ENCODE measurements at regions of chr2 and their contacts with region 1.

Region 1: DNA sequence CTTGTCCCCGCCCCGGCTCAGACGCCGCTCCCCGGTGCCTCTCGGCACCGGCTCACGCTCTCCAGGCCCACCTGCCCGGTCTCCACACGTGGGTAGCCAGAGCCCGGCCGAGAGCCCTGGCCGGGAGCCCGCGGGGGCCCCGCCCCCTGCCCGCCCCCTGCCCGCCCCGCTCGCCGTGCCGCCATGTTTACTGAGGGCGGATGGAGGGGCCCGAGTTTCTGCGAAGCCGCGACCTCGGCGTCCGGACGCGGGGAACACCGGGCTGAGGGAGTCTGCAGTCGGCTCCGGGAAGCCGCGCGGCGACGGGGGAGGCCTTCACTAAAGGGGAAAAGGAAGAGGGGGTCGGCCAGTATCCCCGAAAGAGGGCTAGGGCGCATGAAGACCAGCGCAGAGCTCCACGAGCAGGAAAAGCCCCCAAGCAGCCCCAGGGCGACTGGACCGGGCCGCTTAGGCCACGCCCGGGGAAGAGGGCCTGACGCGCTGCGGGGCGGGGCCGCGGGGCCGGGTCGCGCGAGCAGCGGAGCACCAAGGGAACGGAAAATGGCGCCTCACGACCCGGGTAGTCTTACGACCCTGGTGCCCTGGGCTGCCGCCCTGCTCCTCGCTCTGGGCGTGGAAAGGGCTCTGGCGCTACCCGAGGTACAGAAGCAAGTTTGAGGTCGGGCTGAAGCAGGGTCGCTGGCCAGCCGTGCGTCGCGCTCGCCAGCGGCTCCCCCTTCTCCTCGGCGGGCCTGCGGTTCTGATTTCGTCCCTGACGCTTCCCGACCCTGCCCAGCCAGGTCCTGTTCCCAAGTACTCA is at the starts of genes ATRAID and SLC5A6:
- DNase-seq: peak; percentile 96
- ATAC-seq: peak; percentile 88
- H3K4me3 Mint-ChIP-seq: peak within 1 kb of the TSS; percentile 97
- H3K27ac Mint-ChIP-seq: peak within 1 kb of the TSS; percentile 100
- H3K4me1 Mint-ChIP-seq: peaks cover 33% of the 10 kb centered on the region
- H3K27me3 Mint-ChIP-seq: no peaks in the 10 kb centered on the region
- CTCF ChIP-seq: no peak
- total RNA-seq, gene ATRAID: 73.9 and 77.2 TPM in 2 replicates
- total RNA-seq, gene SLC5A6: 53.2 and 69.9 TPM in 2 replicates

Region 2: GRCh38 chr2:26970244-26970920 is 241.6 kb before region 1 on chr2 and contains the start of gene MAPRE3:
- CTCF ChIA-PET with region 1: no interaction called
- POLR2A ChIA-PET with region 1: no interaction called
- intact Hi-C with region 1: loop called (anchors 2 kb)
- DNase-seq: peak; percentile 88
- ATAC-seq: peak; percentile 93
- H3K4me3 Mint-ChIP-seq: peak within 1 kb of the TSS; percentile 85
- H3K27ac Mint-ChIP-seq: peak within 1 kb of the TSS; percentile 59
- H3K4me1 Mint-ChIP-seq: peaks cover 21% of the 10 kb centered on the region
- H3K27me3 Mint-ChIP-seq: peaks cover 40% of the 10 kb centered on the region
- CTCF ChIP-seq: no peak
- total RNA-seq, gene MAPRE3: 4.6 and 6.3 TPM in 2 replicates

Region 3: GRCh38 chr2:27042159-27042661 is 169.8 kb before region 1 on chr2:
- CTCF ChIA-PET with region 1: no interaction called
- POLR2A ChIA-PET with region 1: interaction called, 10 read pairs
- intact Hi-C with region 1: no loop called
- DNase-seq: peak; percentile 21
- ATAC-seq: peak; percentile 97
- H3K4me3 Mint-ChIP-seq: peak overlapping the region; percentile 70
- H3K27ac Mint-ChIP-seq: peak overlapping the region; percentile 95
- H3K4me1 Mint-ChIP-seq: peaks cover 35% of the 10 kb centered on the region
- H3K27me3 Mint-ChIP-seq: no peaks in the 10 kb centered on the region
- CTCF ChIP-seq: no peak

Region 4: DNA sequence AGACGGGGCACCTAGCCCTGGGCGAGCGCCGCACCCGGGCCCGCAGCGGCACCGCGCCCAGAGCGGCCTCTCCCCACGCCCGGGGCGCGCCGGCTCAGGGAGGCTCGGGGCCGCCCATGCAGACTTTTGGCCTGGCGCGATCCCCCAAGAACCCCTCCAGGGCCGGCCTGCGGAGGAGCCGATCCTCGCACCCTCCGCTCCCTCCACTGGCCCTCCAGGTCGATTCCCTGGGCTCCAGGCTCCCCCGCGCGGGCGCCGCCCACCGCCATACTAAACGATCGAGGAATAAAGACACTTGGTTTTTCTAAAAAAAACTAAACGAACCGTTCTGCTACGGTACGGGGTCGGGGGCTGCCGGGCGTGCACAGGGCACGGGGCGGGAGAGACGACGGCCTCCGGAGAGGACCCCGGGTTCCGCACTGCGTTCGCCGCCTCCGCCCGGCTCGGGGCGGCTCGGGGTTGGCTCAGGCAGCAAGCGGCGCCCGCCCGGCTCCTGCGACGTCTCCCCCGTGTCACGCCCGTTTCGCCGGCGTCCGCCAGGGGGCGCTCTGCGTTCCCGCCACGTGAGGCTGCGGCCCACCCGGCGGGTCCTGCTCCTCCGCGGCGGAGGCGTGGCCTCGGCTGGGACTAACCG is 125.8 kb before region 1 on chr2:
- CTCF ChIA-PET with region 1: no interaction called
- POLR2A ChIA-PET with region 1: interaction called, 4 read pairs
- intact Hi-C with region 1: loop called (anchors 1 kb)
- DNase-seq: peak; percentile 99
- ATAC-seq: peak; percentile 92
- H3K4me3 Mint-ChIP-seq: peak overlapping the region; percentile 87
- H3K27ac Mint-ChIP-seq: peak overlapping the region; percentile 86
- H3K4me1 Mint-ChIP-seq: peaks cover 18% of the 10 kb centered on the region
- H3K27me3 Mint-ChIP-seq: no peaks in the 10 kb centered on the region
- CTCF ChIP-seq: peak; percentile 44

Region 5: GRCh38 chr2:27264753-27265535 is 52.9 kb after region 1 on chr2:
- CTCF ChIA-PET with region 1: no interaction called
- POLR2A ChIA-PET with region 1: interaction called, 9 read pairs
- intact Hi-C with region 1: loop called (anchors 1 kb)
- DNase-seq: peak; percentile 68
- ATAC-seq: peak; percentile 73
- H3K4me3 Mint-ChIP-seq: peak overlapping the region; percentile 88
- H3K27ac Mint-ChIP-seq: no peak overlapping the region
- H3K4me1 Mint-ChIP-seq: peaks cover 33% of the 10 kb centered on the region
- H3K27me3 Mint-ChIP-seq: peaks cover 44% of the 10 kb centered on the region
- CTCF ChIP-seq: no peak

Region 6: GRCh38 chr2:27356382-27357181 is 144.6 kb after region 1 on chr2 and contains the start of gene GTF3C2:
- CTCF ChIA-PET with region 1: no interaction called
- POLR2A ChIA-PET with region 1: interaction called, 4 read pairs
- intact Hi-C with region 1: loop called (anchors 1 kb)
- DNase-seq: peak; percentile 87
- ATAC-seq: peak; percentile 83
- H3K4me3 Mint-ChIP-seq: peak within 1 kb of the TSS; percentile 98
- H3K27ac Mint-ChIP-seq: peak within 1 kb of the TSS; percentile 100
- H3K4me1 Mint-ChIP-seq: peaks cover 53% of the 10 kb centered on the region
- H3K27me3 Mint-ChIP-seq: no peaks in the 10 kb centered on the region
- CTCF ChIP-seq: no peak
- total RNA-seq, gene GTF3C2: 91.7 and 119 TPM in 2 replicates

Region 7: GRCh38 chr2:27400348-27401135 is 188.5 kb after region 1 on chr2:
- CTCF ChIA-PET with region 1: no interaction called
- POLR2A ChIA-PET with region 1: no interaction called
- intact Hi-C with region 1: no loop called
- DNase-seq: no peak
- ATAC-seq: no peak
- H3K4me3 Mint-ChIP-seq: no peak overlapping the region
- H3K27ac Mint-ChIP-seq: no peak overlapping the region
- H3K4me1 Mint-ChIP-seq: peaks cover 20% of the 10 kb centered on the region
- H3K27me3 Mint-ChIP-seq: no peaks in the 10 kb centered on the region
- CTCF ChIP-seq: no peak

Region 8: GRCh38 chr2:27628767-27629709 is 417.0 kb after region 1 on chr2 and contains the starts of genes CCDC121 and GPN1:
- CTCF ChIA-PET with region 1: no interaction called
- POLR2A ChIA-PET with region 1: no interaction called
- intact Hi-C with region 1: loop called (anchors 2 kb)
- DNase-seq: peak; percentile 85
- ATAC-seq: peak; percentile 99
- H3K4me3 Mint-ChIP-seq: no peak within 1 kb of the TSS
- H3K27ac Mint-ChIP-seq: peak within 1 kb of the TSS; percentile 69
- H3K4me1 Mint-ChIP-seq: peaks cover 12% of the 10 kb centered on the region
- H3K27me3 Mint-ChIP-seq: no peaks in the 10 kb centered on the region
- CTCF ChIP-seq: no peak
- total RNA-seq, gene CCDC121: 0.69 and 0.71 TPM in 2 replicates
- total RNA-seq, gene GPN1: 36.9 and 39.3 TPM in 2 replicates

Region 9: GRCh38 chr2:27833931-27834330 is 621.9 kb after region 1 on chr2:
- CTCF ChIA-PET with region 1: no interaction called
- POLR2A ChIA-PET with region 1: no interaction called
- intact Hi-C with region 1: no loop called
- DNase-seq: no peak
- ATAC-seq: no peak
- H3K4me3 Mint-ChIP-seq: no peak overlapping the region
- H3K27ac Mint-ChIP-seq: no peak overlapping the region
- H3K4me1 Mint-ChIP-seq: no peaks in the 10 kb centered on the region
- H3K27me3 Mint-ChIP-seq: no peaks in the 10 kb centered on the region
- CTCF ChIP-seq: no peak

Measured in activated B cell treated with CpG ODN at 0.5 μM for 24 hours (primary cell).